Right lobe of liver (tissue), 6 donors: ENCODE measurements at regions of chr3 and their contacts with region 1.

Region 1: GRCh38 chr3:188286087-188286513 is 132.1 kb downstream of the LPP start:
- DNase-seq: no peak
- ATAC-seq: peak in 1 of 4 donors; percentile 34
- H3K4me3 ChIP-seq: no peak overlapping the region
- H3K27ac ChIP-seq: peak overlapping the region in 1 of 3 donors; percentile 3
- H3K4me1 ChIP-seq: peaks cover 0 to 56% (median 19%) of the 10 kb centered on the region in 4 donors
- H3K27me3 ChIP-seq: no peaks in the 10 kb centered on the region
- CTCF ChIP-seq: no peak
- POLR2A ChIP-seq: no peak

Region 2: DNA sequence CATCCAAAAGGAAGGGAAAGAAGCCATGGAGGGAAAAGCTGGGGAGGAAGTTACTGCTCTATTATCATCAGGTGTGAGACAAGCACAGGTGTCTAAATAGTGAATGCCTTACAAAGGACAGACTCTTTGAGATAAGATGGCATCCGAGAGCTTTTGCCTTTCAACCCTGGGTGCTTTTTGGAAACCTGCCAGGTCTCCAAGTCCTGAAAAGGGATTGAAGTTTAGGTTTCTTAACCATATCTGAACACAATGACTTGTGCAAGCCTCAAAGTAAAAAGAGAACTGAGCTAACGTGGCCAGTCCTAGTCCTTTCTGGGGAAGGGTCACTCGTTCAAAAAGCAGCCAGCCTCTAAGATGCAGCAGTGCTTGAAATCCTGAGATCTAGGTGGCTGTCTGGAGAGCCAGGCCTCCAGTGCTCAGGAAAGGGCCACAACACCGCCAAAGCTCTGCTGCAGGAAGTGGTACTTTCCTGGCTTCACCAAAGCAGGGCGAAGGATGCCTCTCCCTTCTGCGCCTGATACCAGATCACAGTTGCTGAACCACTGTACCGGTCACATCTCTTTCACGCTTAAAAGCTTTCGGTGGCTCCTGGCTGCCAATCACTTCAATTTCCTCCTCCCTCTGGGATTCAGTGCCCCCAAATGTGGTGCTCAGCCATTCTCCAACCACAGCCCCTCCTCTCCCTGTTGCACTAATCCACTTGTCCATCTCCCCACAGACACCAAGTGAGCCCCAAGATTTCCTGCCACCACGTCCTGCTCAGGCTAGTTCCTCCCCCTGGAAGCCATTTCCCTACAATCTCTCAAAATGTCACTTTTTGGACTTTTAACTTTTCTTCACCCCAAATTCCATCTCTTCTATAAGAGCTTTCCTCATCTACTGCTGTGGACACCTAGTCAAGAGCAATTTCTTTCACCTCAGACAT is 236.2 kb before region 1 on chr3:
- intact Hi-C with region 1: loop called in 1 of 2 experiments (anchors 10 kb)
- DNase-seq: no peak
- ATAC-seq: no peak
- H3K4me3 ChIP-seq: no peak overlapping the region
- H3K27ac ChIP-seq: no peak overlapping the region
- H3K4me1 ChIP-seq: no peaks in the 10 kb centered on the region
- H3K27me3 ChIP-seq: no peaks in the 10 kb centered on the region
- CTCF ChIP-seq: no peak
- POLR2A ChIP-seq: no peak